Dorsolateral prefrontal cortex (tissue), 120 donors: ENCODE measurements at regions of chr1 and their contacts with region 1.

Region 1: DNA sequence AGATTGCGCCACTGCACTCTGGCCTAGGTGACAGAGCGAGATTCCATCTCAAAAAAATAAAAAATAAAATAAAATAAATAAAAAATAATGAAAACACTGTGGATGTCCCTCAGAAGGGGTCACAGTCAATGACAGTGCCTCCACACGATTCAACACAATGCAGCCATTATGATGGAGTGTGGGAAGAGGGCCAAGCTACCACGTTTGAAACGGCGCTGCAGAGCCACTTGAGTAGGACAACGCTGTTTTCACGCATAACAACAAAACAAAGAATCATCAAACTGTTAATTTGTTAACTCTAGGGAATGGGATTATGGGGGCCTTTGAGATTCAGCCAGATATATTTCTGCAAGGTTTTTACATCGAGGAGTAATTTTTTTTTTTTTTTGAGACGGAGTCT is 36.5 kb downstream of the NKAIN1 start:
- DNase-seq: peak in 5 of 10 donors; percentile 35 to 79 (median 53)
- H3K4me3 ChIP-seq: peak overlapping the region in 2 of 59 donors; percentile 1 to 13
- H3K27ac ChIP-seq: peak overlapping the region in 55 of 59 donors; percentile 1 to 99 (median 87)
- H3K27me3 ChIP-seq: no peaks in the 10 kb centered on the region
- CTCF ChIP-seq: peak in 5 of 56 donors; percentile 9 to 26 (median 17)

Region 2: GRCh38 chr1:31127266-31127665 is 75.9 kb before region 1 on chr1:
- intact Hi-C with region 1: no loop called
- DNase-seq: no peak
- H3K4me3 ChIP-seq: no peak overlapping the region
- H3K27ac ChIP-seq: no peak overlapping the region
- H3K27me3 ChIP-seq: no peaks in the 10 kb centered on the region
- CTCF ChIP-seq: no peak

Region 3: GRCh38 chr1:31218705-31219104 is 15.5 kb after region 1 on chr1:
- intact Hi-C with region 1: loop called in 1 of 2 experiments (anchors 2 kb)
- DNase-seq: peak; percentile 42 to 87 (median 67)
- H3K4me3 ChIP-seq: no peak overlapping the region
- H3K27ac ChIP-seq: peak overlapping the region in 55 of 59 donors; percentile 23 to 97 (median 87)
- H3K27me3 ChIP-seq: no peaks in the 10 kb centered on the region
- CTCF ChIP-seq: peak in 14 of 56 donors; percentile 10 to 56 (median 26)